MCF 10A (cell line): ENCODE measurements at regions of chr1 and their contacts with region 1.

Region 1: GRCh38 chr1:185595835-185596667 is 138.1 kb upstream of the HMCN1 start:
- DNase-seq: peak; percentile 84
- H3K4me3 Mint-ChIP-seq: no peak overlapping the region
- H3K27ac Mint-ChIP-seq: no peak overlapping the region
- H3K4me1 Mint-ChIP-seq: no peaks in the 10 kb centered on the region
- H3K27me3 Mint-ChIP-seq: no peaks in the 10 kb centered on the region
- CTCF ChIP-seq: peak; percentile 90

Region 2: DNA sequence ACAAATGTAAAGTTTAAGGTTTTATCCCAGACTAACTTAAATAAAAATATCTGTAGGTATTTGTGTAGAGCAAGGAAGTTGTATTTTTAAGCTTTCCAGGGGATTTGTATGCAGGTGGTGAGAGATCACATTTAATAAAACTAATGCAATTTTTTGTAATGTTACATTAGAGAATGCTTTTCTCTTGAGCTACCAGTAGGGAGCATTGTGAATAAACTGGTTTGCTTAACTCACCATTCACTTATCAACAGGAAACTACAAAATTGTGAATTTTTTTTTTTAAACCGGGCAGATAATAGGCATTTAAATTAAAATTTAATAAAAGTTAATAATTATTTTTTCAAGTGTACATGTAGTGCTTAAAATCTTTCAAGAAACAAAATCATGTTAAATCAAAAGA is 357.6 kb before region 1 on chr1:
- CTCF ChIA-PET with region 1: interaction called, 25 read pairs
- POLR2A ChIA-PET with region 1: no interaction called
- intact Hi-C with region 1: loop called (anchors 1 kb)
- DNase-seq: peak; percentile 24
- H3K4me3 Mint-ChIP-seq: no peak overlapping the region
- H3K27ac Mint-ChIP-seq: no peak overlapping the region
- H3K4me1 Mint-ChIP-seq: no peaks in the 10 kb centered on the region
- H3K27me3 Mint-ChIP-seq: no peaks in the 10 kb centered on the region
- CTCF ChIP-seq: peak; percentile 25

Region 3: DNA sequence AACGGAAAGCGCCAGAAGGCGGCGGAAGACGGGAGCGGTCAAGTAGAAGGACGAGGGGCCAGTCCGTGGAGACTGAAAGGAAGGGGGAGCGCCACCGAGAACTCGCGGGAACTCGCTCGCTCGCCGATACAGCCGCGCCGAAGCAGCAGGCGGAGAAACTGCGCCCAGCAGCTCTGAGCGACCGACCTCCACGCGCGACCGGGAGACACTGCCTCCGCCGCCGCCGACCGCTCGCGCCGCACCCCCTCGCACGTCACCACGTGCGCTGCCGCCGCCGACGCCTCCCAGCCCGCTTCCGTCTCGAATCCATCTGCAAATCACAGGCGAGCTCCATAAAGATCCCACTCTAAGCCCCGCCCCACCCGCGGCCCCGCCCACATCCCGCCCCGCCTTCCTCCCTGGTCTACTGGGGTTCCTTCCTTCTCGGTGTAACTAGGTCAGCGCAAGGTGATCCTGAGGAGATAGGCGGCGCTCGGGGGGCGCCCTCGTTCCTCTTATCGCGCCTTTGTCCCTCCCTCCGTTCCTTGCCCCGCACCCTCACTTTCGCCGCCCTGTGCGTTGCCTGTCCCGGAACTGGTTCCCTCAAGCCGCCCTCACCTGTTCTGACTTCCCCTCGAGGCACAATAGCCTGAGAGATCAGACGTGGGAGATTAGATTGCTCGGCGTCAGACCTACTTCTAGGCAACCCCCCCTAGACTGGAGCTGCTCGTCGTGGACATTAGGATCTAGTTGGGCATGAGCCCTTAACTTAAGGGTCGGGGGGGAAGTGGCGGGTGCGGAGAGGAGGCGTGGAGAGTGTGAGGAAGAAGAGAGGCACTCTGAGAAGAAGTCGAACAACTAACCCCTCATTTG is 278.8 kb before region 1 on chr1 and contains the start of gene IVNS1ABP:
- CTCF ChIA-PET with region 1: interaction called, 58 read pairs
- POLR2A ChIA-PET with region 1: interaction called, 15 read pairs
- intact Hi-C with region 1: loop called (anchors 1 kb)
- DNase-seq: peak; percentile 98
- H3K4me3 Mint-ChIP-seq: peak within 1 kb of the TSS; percentile 85
- H3K27ac Mint-ChIP-seq: peak within 1 kb of the TSS; percentile 94
- H3K4me1 Mint-ChIP-seq: peaks cover 36% of the 10 kb centered on the region
- H3K27me3 Mint-ChIP-seq: no peaks in the 10 kb centered on the region
- CTCF ChIP-seq: no peak
- total RNA-seq, gene IVNS1ABP: 67.4 and 92.0 TPM in 2 replicates

Region 4: GRCh38 chr1:185546029-185546428 is 50.0 kb before region 1 on chr1:
- CTCF ChIA-PET with region 1: interaction called, 20 read pairs
- POLR2A ChIA-PET with region 1: no interaction called
- intact Hi-C with region 1: no loop called
- DNase-seq: no peak
- H3K4me3 Mint-ChIP-seq: no peak overlapping the region
- H3K27ac Mint-ChIP-seq: no peak overlapping the region
- H3K4me1 Mint-ChIP-seq: no peaks in the 10 kb centered on the region
- H3K27me3 Mint-ChIP-seq: no peaks in the 10 kb centered on the region
- CTCF ChIP-seq: no peak

Region 5: DNA sequence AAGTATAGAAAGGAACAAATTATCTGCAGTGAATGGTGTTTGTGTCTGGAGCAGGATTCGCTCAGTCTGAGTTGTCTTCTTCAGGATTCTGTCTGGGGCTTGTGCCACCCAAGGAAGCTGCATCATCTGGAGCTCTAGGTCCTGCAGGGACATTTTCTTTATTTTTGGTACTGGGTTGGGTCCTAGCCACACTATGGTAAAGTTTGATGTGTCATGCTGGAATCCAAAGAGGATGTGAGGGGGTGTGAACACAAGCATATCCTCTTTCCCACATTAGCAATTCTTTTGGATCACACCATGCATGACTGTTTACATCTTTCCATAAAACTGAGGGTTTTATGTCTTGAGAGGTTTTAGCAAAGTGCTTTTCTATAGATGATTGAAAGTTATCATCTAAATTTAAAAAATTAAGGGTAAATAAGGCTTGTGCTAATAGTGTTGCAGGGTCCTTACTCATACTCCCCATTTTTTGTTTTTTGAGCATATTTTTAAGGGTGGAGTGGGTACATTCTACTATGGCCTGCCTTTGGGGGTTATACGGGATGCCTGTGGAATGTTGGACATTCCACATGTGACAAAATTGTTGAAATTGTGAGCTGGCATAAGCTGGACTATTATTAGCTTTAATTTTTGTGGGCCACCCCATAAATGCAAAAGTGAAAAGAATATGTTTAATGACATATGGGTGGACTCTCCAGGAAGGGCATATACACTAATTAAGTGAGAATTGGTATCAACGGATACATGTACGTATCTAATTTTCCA is 13.9 kb before region 1 on chr1:
- CTCF ChIA-PET with region 1: interaction called, 41 read pairs
- POLR2A ChIA-PET with region 1: interaction called, 3 read pairs
- intact Hi-C with region 1: no loop called
- DNase-seq: no peak
- H3K4me3 Mint-ChIP-seq: no peak overlapping the region
- H3K27ac Mint-ChIP-seq: no peak overlapping the region
- H3K4me1 Mint-ChIP-seq: peaks cover 5% of the 10 kb centered on the region
- H3K27me3 Mint-ChIP-seq: no peaks in the 10 kb centered on the region
- CTCF ChIP-seq: no peak

Region 6: GRCh38 chr1:185646202-185646683 is 50.2 kb after region 1 on chr1:
- CTCF ChIA-PET with region 1: interaction called, 11 read pairs
- POLR2A ChIA-PET with region 1: interaction called, 5 read pairs
- intact Hi-C with region 1: no loop called
- DNase-seq: peak; percentile 99
- H3K4me3 Mint-ChIP-seq: peak overlapping the region; percentile 68
- H3K27ac Mint-ChIP-seq: peak overlapping the region; percentile 88
- H3K4me1 Mint-ChIP-seq: peaks cover 29% of the 10 kb centered on the region
- H3K27me3 Mint-ChIP-seq: no peaks in the 10 kb centered on the region
- CTCF ChIP-seq: no peak